ENCODE measurements at regions of chrX and their contacts with region 1.

Region 1: DNA sequence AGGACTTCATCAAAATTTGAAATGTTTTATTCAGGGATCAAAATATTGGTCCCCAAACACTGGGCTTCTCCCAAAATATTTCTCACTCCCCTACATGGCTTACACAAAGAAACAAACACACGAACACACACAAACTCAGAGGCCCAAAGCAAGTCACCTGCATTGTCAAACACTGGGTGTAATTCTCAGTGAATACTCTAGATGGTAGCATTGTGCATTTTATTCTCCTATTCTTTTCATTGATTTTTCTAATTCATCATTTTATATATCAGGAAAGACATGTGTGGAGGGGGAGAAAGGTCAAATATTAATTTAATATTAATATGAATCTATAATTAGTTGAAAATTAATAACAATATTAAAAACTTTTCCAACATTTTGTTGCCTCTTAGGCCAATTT is 72.3 kb upstream of the TNMD start:
- DNase-seq: no peak
- H3K4me3 ChIP-seq: no peak overlapping the region
- H3K27ac ChIP-seq: no peak overlapping the region
- H3K4me1 ChIP-seq: no peaks in the 10 kb centered on the region
- H3K27me3 ChIP-seq: no peaks in the 10 kb centered on the region
- CTCF ChIP-seq: peak in 2 of 4 experiments; percentile 42 to 55
- POLR2A ChIP-seq: no peak

Region 2: DNA sequence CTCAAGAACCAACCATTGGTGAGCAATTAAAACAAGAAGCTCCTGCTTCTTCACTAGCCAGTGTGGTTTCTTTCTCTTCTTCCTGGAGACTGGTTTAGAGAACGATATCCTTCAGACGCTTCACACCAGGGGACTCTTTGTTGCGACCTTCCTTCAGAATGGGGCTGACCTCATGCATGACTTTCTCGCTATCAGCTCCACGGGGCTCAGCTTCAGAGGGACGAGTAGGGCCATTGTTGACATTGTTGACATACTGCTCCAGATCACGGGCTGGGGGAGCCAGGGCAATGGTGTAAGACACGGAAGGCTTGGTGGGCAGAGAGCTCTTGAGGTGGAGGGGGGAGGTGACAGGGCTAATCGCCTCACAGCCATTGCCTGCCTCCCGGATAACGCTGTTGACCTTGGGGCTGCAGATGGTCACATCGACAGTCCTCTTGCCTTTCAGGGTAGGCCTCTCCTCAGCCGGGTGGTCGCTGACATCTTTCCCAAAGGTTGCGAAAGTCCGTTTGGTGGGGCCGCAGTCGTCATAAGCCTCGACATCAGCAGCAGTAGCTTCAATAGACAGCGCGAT is 216.2 kb before region 1 on chrX:
- intact Hi-C with region 1: no loop called
- DNase-seq: no peak
- H3K4me3 ChIP-seq: no peak overlapping the region
- H3K27ac ChIP-seq: no peak overlapping the region
- H3K4me1 ChIP-seq: no peaks in the 10 kb centered on the region
- H3K27me3 ChIP-seq: no peaks in the 10 kb centered on the region
- CTCF ChIP-seq: no peak
- POLR2A ChIP-seq: no peak

Region 3: GRCh38 chrX:100636321-100636991 is 124.0 kb after region 1 on chrX and contains the start of gene TSPAN6:
- intact Hi-C with region 1: loop called (anchors 10 kb)
- DNase-seq: peak; percentile 75
- H3K4me3 ChIP-seq: peak within 1 kb of the TSS; percentile 41 to 44
- H3K27ac ChIP-seq: peak within 1 kb of the TSS; percentile 51
- H3K4me1 ChIP-seq: no peaks in the 10 kb centered on the region
- H3K27me3 ChIP-seq: no peaks in the 10 kb centered on the region
- CTCF ChIP-seq: peak in 3 of 4 experiments; percentile 39 to 55 (median 51)
- POLR2A ChIP-seq: peak; percentile 34
- total RNA-seq, gene TSPAN6: 26.1 to 34.9 TPM